Naive thymus-derived CD8-positive, alpha-beta T cell (primary cell): ENCODE measurements at regions of chr16 and their contacts with region 1.

Region 1: GRCh38 chr16:4253394-4254150 is 11.7 kb upstream of the SRL start:
- DNase-seq: peak; percentile 94 to 100 (median 100)
- ATAC-seq: peak; percentile 96
- H3K4me3 Mint-ChIP-seq: peak overlapping the region; percentile 91 to 97 (median 95)
- H3K27ac Mint-ChIP-seq: peak overlapping the region; percentile 88 to 99 (median 97)
- H3K4me1 Mint-ChIP-seq: peaks cover 3 to 18% (median 7%) of the 10 kb centered on the region in 4 donors
- H3K27me3 Mint-ChIP-seq: no peaks in the 10 kb centered on the region

Region 2: DNA sequence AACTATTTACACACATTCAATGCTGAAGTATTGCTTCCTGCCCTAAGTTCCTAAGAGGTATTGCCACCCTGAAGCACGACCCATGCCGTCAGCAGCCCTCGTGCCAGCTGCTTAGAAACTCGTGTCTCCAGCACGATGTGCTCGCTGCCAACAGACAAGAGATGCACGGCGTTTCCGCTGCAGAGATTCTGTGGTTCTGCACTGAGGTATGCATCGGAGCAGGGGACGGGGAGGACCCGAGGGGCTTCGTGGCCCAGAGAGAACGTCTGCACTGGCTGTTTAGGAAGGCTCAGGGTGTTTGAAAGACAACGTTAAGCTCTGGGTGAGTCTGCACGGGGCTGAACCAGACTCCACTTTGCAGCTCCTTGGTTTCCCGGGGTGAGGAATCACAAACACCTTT is 290.4 kb before region 1 on chr16:
- POLR2A ChIA-PET with region 1: interaction called, 10 read pairs
- DNase-seq: peak; percentile 25 to 83 (median 71)
- ATAC-seq: peak; percentile 67 to 83
- H3K4me3 Mint-ChIP-seq: peak overlapping the region; percentile 4 to 77 (median 60)
- H3K27ac Mint-ChIP-seq: peak overlapping the region; percentile 68 to 98 (median 96)
- H3K4me1 Mint-ChIP-seq: peaks cover 9 to 35% (median 26%) of the 10 kb centered on the region in 4 donors
- H3K27me3 Mint-ChIP-seq: peaks cover 0 to 3% (median 0%) of the 10 kb centered on the region in 5 donors